Mucosa of descending colon (tissue), 3 donors: ENCODE measurements at regions of chr4 and their contacts with region 1.

Region 1: GRCh38 chr4:7192252-7193029 is at the start of gene SORCS2:
- DNase-seq: peak in 2 of 3 donors; percentile 60 to 70
- ATAC-seq: peak; percentile 83
- H3K4me3 ChIP-seq: no peak within 1 kb of the TSS
- H3K4me1 ChIP-seq: no peaks in the 10 kb centered on the region
- CTCF ChIP-seq: peak; percentile 63
- total RNA-seq, gene SORCS2: 0.20 to 3.1 (median 1.5) TPM

Region 2: GRCh38 chr4:6917461-6918271 is 274.8 kb before region 1 on chr4:
- intact Hi-C with region 1: no loop called
- DNase-seq: peak; percentile 93 to 97 (median 94)
- ATAC-seq: peak; percentile 91
- H3K4me3 ChIP-seq: no peak overlapping the region
- H3K4me1 ChIP-seq: peaks cover 63% of the 10 kb centered on the region
- CTCF ChIP-seq: peak; percentile 73

Region 3: DNA sequence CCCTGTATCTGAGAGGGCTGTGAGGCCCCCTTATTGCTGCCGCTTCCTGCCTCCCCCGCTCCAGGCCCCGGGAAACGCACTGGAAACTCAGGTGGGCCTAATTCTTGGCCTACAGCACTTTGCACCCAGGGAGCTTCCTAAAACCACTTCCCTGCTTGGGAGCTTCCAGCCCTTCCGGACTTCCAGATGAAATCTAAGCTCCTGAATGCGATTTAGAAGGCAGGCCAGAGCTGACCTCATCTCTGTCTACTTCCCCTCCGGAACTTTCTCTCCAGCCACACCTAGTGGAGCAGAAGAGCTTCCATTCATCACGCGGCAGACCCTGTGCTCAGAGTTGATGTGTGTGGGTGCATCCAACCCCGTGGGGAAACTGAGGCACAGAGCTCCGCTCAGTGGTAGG is 84.1 kb after region 1 on chr4:
- intact Hi-C with region 1: no loop called
- DNase-seq: no peak
- ATAC-seq: no peak
- H3K4me3 ChIP-seq: no peak overlapping the region
- H3K4me1 ChIP-seq: no peaks in the 10 kb centered on the region
- CTCF ChIP-seq: no peak

Region 4: DNA sequence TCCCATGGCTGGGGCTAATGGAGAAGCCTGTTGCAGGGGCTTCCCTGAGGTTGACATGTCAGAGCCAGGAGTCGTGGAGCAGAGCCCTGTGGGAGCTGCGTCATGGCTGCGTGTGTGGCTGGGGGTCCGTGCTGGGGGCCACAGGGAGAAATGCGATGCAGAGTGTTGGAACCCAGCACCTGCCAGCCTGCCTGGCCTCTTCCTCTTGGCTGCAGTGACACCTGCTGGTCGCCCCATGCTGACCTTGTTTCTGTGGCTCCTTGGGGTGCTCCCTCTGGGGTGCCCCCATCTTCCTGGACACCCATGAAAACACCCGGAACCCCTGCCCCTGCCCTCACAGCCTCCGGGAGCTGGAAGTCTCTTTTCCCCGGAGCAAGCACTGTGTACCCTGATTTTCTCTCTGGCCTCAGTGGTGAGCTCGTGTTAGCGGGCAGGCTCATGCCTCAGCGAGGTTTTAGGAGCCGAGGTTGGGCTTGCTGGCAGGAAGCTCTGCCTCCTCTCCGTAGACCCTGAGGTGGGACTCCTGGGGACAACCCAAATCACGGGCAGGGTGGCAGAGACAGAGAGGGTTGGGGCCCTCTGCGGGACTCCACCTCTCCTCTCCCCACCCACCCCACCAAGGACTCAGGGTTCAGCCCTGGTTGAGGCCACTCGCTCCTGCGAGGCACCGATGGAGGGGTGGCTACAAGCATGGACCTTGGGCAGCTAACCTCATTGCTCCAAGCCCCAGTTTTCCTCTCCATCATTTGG is 103.6 kb after region 1 on chr4:
- intact Hi-C with region 1: loop called in 1 of 2 experiments (anchors 10 kb)
- DNase-seq: peak in 2 of 3 donors; percentile 27 to 39
- ATAC-seq: no peak
- H3K4me3 ChIP-seq: no peak overlapping the region
- H3K4me1 ChIP-seq: no peaks in the 10 kb centered on the region
- CTCF ChIP-seq: no peak

Region 5: DNA sequence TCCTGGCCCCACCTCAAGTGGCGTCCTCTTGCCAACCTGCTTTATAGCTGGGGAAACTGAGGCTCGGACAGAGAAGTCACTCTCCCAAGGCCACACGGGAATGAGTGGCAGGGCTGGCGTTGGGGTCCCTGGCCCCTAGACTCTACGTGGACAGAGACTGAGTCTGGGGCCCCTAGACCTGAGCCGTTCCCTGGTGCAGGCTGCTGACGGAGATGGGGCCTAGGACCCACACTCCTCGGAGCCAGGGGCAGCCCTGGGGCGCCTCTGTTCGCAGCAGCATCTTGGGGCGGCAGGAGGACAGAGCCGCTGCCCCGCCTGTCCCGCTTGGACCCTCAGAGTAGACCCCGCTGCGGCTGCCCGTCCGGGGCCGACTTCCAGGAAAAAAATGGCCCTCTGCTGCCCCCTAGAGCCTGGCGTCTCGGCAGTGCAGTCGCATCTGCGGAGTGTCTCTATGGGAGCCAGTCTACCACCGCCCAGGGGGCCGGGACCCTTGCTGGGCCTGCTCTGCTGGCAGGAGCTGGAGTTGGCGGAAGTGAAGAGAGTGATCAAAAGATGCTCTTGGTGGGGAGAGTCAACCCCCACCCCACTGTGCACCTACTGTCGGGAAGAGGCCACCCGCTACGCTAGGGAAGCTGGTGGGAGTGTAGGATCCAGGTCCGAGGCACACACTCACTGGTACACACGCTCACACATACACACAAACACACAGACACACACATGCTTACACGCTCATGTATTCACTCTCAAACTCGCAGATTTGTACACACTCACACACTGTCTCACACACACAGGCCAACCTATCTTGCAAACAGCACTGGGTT is 527.1 kb after region 1 on chr4:
- intact Hi-C with region 1: loop called in 1 of 2 experiments (anchors 10 kb)
- DNase-seq: peak in 2 of 3 donors; percentile 63 to 70
- ATAC-seq: peak; percentile 53
- H3K4me3 ChIP-seq: no peak overlapping the region
- H3K4me1 ChIP-seq: no peaks in the 10 kb centered on the region
- CTCF ChIP-seq: peak; percentile 71